ENCODE measurements at regions of chr5 and their contacts with region 1.

Region 1: GRCh38 chr5:173293817-173294672 is 34.2 kb downstream of the STC2 start:
- DNase-seq: peak; percentile 65 to 94 (median 85)

Region 2: DNA sequence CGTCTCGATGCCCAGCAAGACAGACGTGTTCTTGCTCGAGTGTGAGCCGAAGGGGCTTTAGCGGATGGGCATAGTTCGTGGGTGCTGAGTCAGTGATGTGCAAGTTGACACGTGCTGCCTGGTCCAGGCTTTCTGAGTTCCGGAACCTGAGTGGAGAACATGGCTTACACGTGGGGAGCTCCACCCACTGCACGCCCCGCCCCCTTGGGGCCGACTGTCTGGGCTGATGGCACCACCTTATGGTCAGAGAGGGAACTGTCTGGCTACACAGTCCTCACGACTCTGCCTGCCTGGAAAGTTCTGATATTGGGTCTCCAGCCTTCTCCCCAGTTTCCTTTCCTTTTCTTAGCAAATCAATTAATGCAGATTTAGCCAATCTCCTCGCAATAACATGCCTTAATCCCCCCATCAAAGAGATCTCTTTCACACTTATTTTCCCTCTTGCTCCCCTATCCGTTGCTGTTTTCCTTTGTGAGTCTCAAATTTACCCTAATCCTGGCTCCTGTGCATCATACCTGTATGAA is 38.0 kb after region 1 on chr5:
- intact Hi-C with region 1: loop called (anchors 2 kb)
- DNase-seq: peak; percentile 43 to 93 (median 82)

Region 3: GRCh38 chr5:173498286-173498685 is 204.2 kb after region 1 on chr5:
- intact Hi-C with region 1: loop called (anchors 10 kb)
- DNase-seq: peak in 1 of 42 donors; percentile 32

Region 4: GRCh38 chr5:173573126-173573960 is 279.3 kb after region 1 on chr5:
- intact Hi-C with region 1: loop called (anchors 5 kb)
- DNase-seq: peak; percentile 48 to 95 (median 87)

Measured in head of caudate nucleus (tissue), 42 donors.